CD4-positive, alpha-beta memory T cell (primary cell): ENCODE measurements at regions of chr15 and their contacts with region 1.

Region 1: DNA sequence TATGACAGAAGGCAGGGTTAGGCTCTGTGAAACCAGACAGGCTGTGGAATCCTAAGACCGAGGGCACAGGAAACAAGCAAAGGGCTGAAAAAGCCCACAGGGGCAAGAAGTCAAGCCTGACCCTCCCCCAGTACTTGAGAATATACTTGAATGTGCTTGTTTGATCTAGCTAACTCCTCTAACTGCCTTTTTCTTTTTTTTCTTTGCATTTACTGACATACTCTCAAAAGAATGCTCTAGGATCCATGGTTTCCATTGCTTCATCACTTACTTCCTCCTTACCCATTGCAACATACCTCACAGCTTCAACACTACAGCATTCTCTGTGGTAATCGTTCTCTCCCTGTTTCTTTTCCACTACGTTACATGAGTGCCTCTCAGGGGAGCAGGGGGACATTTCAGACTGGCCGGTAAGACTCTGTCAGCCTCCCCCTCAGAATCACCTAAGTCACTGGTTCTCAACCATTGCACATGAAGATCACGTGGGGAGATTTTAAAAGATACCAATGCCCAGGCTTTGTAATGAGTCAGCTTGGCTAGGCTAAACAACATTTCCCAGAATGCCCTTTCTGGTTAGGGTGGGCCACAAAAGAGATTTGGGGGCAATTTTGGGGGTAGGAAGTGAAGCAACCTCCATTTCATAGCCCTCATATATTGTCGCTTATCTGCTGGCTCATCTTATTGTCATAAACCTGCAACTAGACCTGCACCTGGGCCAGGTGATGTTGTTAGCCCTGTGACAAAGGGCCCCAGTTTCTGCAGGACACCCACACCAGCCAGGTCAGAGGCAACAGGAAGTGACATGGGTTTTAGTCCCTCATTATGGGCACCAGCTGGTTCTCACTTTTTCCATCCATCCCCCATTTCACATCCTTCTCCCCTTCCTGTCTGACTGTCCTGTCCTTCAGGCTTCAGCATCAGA is 24.6 kb upstream of the RSL24D1 start:
- DNase-seq: peak in 1 of 5 donors; percentile 42
- H3K4me3 ChIP-seq: no peak overlapping the region
- H3K4me3 Mint-ChIP-seq: peak overlapping the region in 6 of 8 donors; percentile 9 to 75 (median 56)
- H3K27ac ChIP-seq: no peak overlapping the region
- H3K27ac Mint-ChIP-seq: peak overlapping the region in 6 of 7 donors; percentile 34 to 77 (median 62)
- H3K4me1 ChIP-seq: peaks cover 57% of the 10 kb centered on the region
- H3K4me1 Mint-ChIP-seq: peaks cover 43 to 73% (median 57%) of the 10 kb centered on the region in 4 donors
- H3K27me3 ChIP-seq: no peaks in the 10 kb centered on the region
- H3K27me3 Mint-ChIP-seq: no peaks in the 10 kb centered on the region

Region 2: DNA sequence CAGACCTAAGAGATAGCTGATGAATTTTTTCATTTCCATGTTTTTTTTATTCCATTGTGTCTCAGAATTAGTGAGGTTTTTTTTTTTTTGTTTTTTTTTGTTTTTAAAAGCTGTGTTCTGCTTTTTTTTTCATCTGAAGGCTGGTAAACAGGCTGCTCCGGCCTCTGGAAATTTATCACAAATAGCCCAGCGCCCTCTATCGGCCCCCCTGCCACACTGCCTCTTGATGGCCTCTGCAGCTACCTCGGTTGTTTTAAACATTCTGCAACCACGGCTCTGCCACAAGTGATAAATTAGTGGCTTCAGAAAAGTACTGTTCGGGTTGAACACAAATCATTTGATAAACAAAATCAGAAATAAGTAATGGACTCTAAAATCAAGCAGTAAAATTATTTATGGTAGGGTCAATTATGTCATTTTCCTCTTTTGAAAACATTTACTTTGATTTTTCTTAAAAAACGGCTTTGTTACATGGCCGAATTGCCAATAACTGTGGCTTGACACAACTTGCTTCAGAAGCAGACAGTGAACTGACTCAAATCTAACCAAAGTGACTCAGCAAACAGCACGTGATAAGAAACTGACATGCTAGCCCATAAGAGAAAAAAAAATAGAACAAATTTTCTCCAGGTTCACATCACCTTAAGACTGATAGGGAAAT is 112.4 kb before region 1 on chr15:
- CTCF ChIA-PET with region 1: no interaction called
- POLR2A ChIA-PET with region 1: no interaction called
- intact Hi-C with region 1: no loop called
- DNase-seq: peak in 4 of 5 donors; percentile 9 to 19 (median 11)
- H3K4me3 ChIP-seq: no peak overlapping the region
- H3K4me3 Mint-ChIP-seq: no peak overlapping the region
- H3K27ac ChIP-seq: no peak overlapping the region
- H3K27ac Mint-ChIP-seq: no peak overlapping the region
- H3K4me1 ChIP-seq: no peaks in the 10 kb centered on the region
- H3K4me1 Mint-ChIP-seq: no peaks in the 10 kb centered on the region
- H3K27me3 ChIP-seq: no peaks in the 10 kb centered on the region
- H3K27me3 Mint-ChIP-seq: peaks cover 2 to 4% of the 10 kb centered on the region in 2 donors

Region 3: GRCh38 chr15:55196458-55197361 is 24.6 kb before region 1 on chr15 and contains the start of gene RSL24D1:
- CTCF ChIA-PET with region 1: interaction called, 17 read pairs
- POLR2A ChIA-PET with region 1: interaction called, 10 read pairs
- intact Hi-C with region 1: loop called (anchors 1 kb)
- DNase-seq: peak; percentile 94 to 98 (median 97)
- H3K4me3 ChIP-seq: peak within 1 kb of the TSS; percentile 90 to 97
- H3K4me3 Mint-ChIP-seq: no peak within 1 kb of the TSS
- H3K27ac ChIP-seq: peak within 1 kb of the TSS; percentile 87
- H3K27ac Mint-ChIP-seq: no peak within 1 kb of the TSS
- H3K4me1 ChIP-seq: peaks cover 40% of the 10 kb centered on the region
- H3K4me1 Mint-ChIP-seq: peaks cover 10 to 17% (median 13%) of the 10 kb centered on the region in 4 donors
- H3K27me3 ChIP-seq: no peaks in the 10 kb centered on the region
- H3K27me3 Mint-ChIP-seq: no peaks in the 10 kb centered on the region
- total RNA-seq, gene RSL24D1: 103 to 107 TPM

Region 4: GRCh38 chr15:55250392-55250791 is 29.0 kb after region 1 on chr15:
- CTCF ChIA-PET with region 1: interaction called, 3 read pairs
- POLR2A ChIA-PET with region 1: interaction called, 3 read pairs
- intact Hi-C with region 1: loop called (anchors 2 kb)
- DNase-seq: no peak
- H3K4me3 ChIP-seq: no peak overlapping the region
- H3K4me3 Mint-ChIP-seq: peak overlapping the region in 5 of 8 donors; percentile 4 to 66 (median 8)
- H3K27ac ChIP-seq: no peak overlapping the region
- H3K27ac Mint-ChIP-seq: peak overlapping the region; percentile 5 to 89 (median 65)
- H3K4me1 ChIP-seq: peaks cover 60% of the 10 kb centered on the region
- H3K4me1 Mint-ChIP-seq: peaks cover 45 to 70% (median 55%) of the 10 kb centered on the region in 4 donors
- H3K27me3 ChIP-seq: no peaks in the 10 kb centered on the region
- H3K27me3 Mint-ChIP-seq: no peaks in the 10 kb centered on the region

Region 5: DNA sequence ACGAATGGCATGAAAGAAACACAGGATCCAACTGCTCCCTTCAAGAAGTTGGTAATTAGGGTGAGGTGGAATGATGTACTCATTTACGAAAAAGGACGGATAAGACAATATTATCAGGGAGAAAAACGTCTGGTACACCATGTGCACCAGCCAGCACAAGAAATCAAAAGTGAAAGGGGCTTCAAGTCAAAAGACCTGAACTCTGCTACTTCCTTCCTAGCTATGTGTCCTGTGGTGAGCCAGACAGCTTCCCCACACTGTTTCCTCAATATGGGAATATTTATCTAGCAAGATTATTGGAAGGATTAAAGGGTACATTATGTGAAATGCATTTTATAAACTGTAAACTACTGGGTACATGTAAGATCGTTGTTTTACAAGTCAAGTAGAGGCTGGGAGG is 34.4 kb after region 1 on chr15:
- CTCF ChIA-PET with region 1: interaction called, 4 read pairs
- POLR2A ChIA-PET with region 1: no interaction called
- intact Hi-C with region 1: loop called (anchors 2 kb)
- DNase-seq: peak in 3 of 5 donors; percentile 24 to 30 (median 26)
- H3K4me3 ChIP-seq: peak overlapping the region; percentile 8 to 32
- H3K4me3 Mint-ChIP-seq: peak overlapping the region; percentile 80 to 93 (median 83)
- H3K27ac ChIP-seq: peak overlapping the region; percentile 64
- H3K27ac Mint-ChIP-seq: peak overlapping the region; percentile 80 to 97 (median 93)
- H3K4me1 ChIP-seq: peaks cover 66% of the 10 kb centered on the region
- H3K4me1 Mint-ChIP-seq: peaks cover 52 to 78% (median 66%) of the 10 kb centered on the region in 4 donors
- H3K27me3 ChIP-seq: no peaks in the 10 kb centered on the region
- H3K27me3 Mint-ChIP-seq: no peaks in the 10 kb centered on the region

Region 6: DNA sequence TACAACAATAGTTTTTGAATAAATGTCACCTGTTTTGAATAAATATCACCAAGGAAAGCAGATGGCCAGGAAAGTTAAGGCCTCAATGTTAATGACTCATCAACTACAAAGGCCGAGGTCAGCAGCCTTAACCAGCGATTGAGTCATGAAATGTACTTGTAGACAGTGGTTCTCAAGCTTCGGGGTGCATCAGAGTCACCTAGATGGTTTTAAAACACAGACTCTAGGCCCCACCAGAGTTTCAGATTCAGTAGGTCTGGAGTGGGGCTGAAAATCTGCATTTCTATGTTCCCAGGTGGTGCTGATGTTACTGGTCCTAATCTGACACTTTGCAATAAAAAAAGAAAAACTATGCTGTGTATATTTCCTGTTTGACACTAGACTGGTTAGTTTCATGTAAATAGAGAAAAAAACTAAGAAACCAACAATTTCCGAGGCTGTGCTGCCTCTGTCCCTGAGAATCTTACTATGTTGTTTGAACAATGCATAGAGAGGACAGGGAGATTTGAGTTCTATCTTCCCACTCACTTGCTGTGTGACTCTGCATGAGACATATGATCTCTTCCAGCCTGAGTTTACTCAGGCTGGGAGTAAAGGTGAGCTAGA is 58.5 kb after region 1 on chr15:
- CTCF ChIA-PET with region 1: interaction called, 22 read pairs
- POLR2A ChIA-PET with region 1: interaction called, 4 read pairs
- intact Hi-C with region 1: no loop called
- DNase-seq: peak; percentile 38 to 88 (median 45)
- H3K4me3 ChIP-seq: peak overlapping the region; percentile 14 to 25
- H3K4me3 Mint-ChIP-seq: peak overlapping the region; percentile 33 to 88 (median 70)
- H3K27ac ChIP-seq: peak overlapping the region; percentile 56
- H3K27ac Mint-ChIP-seq: peak overlapping the region; percentile 87 to 98 (median 95)
- H3K4me1 ChIP-seq: peaks cover 90% of the 10 kb centered on the region
- H3K4me1 Mint-ChIP-seq: peaks cover 72 to 99% (median 86%) of the 10 kb centered on the region in 4 donors
- H3K27me3 ChIP-seq: no peaks in the 10 kb centered on the region
- H3K27me3 Mint-ChIP-seq: no peaks in the 10 kb centered on the region

Region 7: DNA sequence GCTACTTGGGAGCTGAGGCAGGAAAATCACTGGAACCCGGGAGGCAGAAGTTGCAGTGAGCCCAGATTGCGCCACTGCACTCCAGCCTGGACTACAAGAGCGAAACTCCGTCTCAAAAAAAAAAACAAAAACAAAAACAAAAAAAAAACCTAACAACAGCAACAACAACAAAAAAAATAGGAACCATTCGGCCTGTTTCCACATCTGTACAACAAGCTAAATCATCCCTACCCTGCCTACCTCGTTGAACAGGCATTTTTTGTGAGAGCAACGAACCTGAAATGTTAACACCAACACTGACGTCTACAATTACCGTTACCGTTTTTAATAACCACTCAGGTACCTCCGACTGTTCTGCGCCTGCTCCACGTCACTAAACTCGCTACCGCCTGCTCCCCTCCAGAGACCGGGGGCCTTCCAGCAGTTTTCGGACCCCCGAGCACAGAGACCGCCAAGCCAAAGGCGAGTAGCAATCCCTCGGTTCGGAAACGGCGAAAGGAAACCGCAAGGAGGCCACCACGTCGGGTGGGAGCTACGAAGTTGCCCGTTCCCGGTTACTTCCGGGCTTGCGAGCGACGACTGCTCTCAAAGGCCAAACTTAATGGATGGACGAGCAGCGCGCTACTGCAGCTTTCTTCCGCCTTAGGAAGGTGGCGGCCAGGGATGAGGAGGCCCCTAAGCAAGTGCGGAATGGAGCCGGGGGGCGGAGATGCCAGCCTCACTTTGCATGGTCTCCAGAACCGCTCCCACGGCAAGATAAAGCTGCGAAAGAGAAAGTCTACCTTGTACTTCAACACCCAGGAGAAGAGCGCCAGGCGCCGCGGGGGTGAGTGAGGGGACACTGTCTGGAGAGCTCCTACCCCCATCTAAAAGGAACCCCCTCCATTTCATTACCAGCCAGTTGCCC is 97.5 kb after region 1 on chr15 and contains the starts of genes PIGB and PIGBOS1:
- CTCF ChIA-PET with region 1: interaction called, 13 read pairs
- POLR2A ChIA-PET with region 1: interaction called, 5 read pairs
- intact Hi-C with region 1: loop called (anchors 1 kb)
- DNase-seq: peak; percentile 83 to 88 (median 87)
- H3K4me3 ChIP-seq: peak within 1 kb of the TSS; percentile 98 to 100
- H3K4me3 Mint-ChIP-seq: peak within 1 kb of the TSS; percentile 96 to 100 (median 98)
- H3K27ac ChIP-seq: peak within 1 kb of the TSS; percentile 93
- H3K27ac Mint-ChIP-seq: peak within 1 kb of the TSS; percentile 99 to 100 (median 100)
- H3K4me1 ChIP-seq: peaks cover 61% of the 10 kb centered on the region
- H3K4me1 Mint-ChIP-seq: peaks cover 44 to 82% (median 64%) of the 10 kb centered on the region in 4 donors
- H3K27me3 ChIP-seq: no peaks in the 10 kb centered on the region
- H3K27me3 Mint-ChIP-seq: no peaks in the 10 kb centered on the region
- total RNA-seq, gene PIGB: 26.4 to 28.6 TPM
- total RNA-seq, gene PIGBOS1: 14.1 to 20.3 TPM